Activated CD4-positive, alpha-beta T cell treated with anti-CD3 and anti-CD28 coated beads, Interleukin-2, amount 10 ng/mL, durations not matched to agents 24 days and 14 days (primary cell): ENCODE measurements at regions of chr16 and their contacts with region 1.

Region 1: GRCh38 chr16:89700100-89700648 is 1.3 kb downstream of the SPATA2L start:
- DNase-seq: peak; percentile 99
- H3K4me3 Mint-ChIP-seq: peak overlapping the region; percentile 86
- H3K27ac Mint-ChIP-seq: peak overlapping the region; percentile 87
- H3K4me1 Mint-ChIP-seq: peaks cover 14% of the 10 kb centered on the region
- H3K27me3 Mint-ChIP-seq: no peaks in the 10 kb centered on the region

Region 2: GRCh38 chr16:89560378-89561141 is 139.6 kb before region 1 on chr16 and contains the start of gene RPL13:
- intact Hi-C with region 1: loop called (anchors 2 kb)
- DNase-seq: peak; percentile 98
- H3K4me3 Mint-ChIP-seq: peak within 1 kb of the TSS; percentile 94
- H3K27ac Mint-ChIP-seq: peak within 1 kb of the TSS; percentile 99
- H3K4me1 Mint-ChIP-seq: peaks cover 44% of the 10 kb centered on the region
- H3K27me3 Mint-ChIP-seq: no peaks in the 10 kb centered on the region
- total RNA-seq, gene RPL13: 2,234 and 2,296 TPM in 2 replicates

Region 3: DNA sequence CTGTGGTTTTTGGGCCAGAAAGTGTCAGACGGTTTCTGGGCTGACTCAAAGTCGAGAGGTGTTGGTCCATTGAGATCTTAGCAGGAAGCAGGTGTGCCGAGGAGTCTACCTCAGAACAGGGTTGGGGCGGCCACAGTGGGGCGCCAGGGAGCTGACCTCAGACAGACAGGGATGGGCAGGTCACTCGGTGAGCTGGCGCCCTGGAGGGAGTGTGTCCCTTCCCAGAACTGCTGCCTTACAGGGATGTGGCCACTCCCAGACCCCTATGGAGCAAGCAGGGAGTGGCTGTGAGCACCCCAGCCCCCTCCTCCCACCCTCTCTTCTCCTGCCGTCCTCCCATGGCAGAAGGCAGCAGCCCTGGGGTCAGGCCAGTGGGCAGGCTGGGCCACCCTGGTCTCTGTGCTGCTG is 100.7 kb before region 1 on chr16:
- intact Hi-C with region 1: no loop called
- DNase-seq: peak; percentile 76
- H3K4me3 Mint-ChIP-seq: no peak overlapping the region
- H3K27ac Mint-ChIP-seq: peak overlapping the region; percentile 56
- H3K4me1 Mint-ChIP-seq: peaks cover 9% of the 10 kb centered on the region
- H3K27me3 Mint-ChIP-seq: no peaks in the 10 kb centered on the region

Region 4: GRCh38 chr16:89686520-89687091 is 13.6 kb before region 1 on chr16 and contains the start of gene CDK10:
- intact Hi-C with region 1: loop called (anchors 1 kb)
- DNase-seq: peak; percentile 99
- H3K4me3 Mint-ChIP-seq: peak within 1 kb of the TSS; percentile 95
- H3K27ac Mint-ChIP-seq: peak within 1 kb of the TSS; percentile 95
- H3K4me1 Mint-ChIP-seq: peaks cover 11% of the 10 kb centered on the region
- H3K27me3 Mint-ChIP-seq: no peaks in the 10 kb centered on the region
- total RNA-seq, gene CDK10: 104 and 108 TPM in 2 replicates

Region 5: GRCh38 chr16:89720813-89721545 is 20.8 kb after region 1 on chr16 and contains the starts of genes VPS9D1 and ZNF276:
- intact Hi-C with region 1: loop called (anchors 1 kb)
- DNase-seq: peak; percentile 94
- H3K4me3 Mint-ChIP-seq: peak within 1 kb of the TSS; percentile 90
- H3K27ac Mint-ChIP-seq: peak within 1 kb of the TSS; percentile 92
- H3K4me1 Mint-ChIP-seq: peaks cover 37% of the 10 kb centered on the region
- H3K27me3 Mint-ChIP-seq: no peaks in the 10 kb centered on the region
- total RNA-seq, gene VPS9D1: 3.6 and 3.9 TPM in 2 replicates
- total RNA-seq, gene ZNF276: 32.9 and 33.3 TPM in 2 replicates

Region 6: DNA sequence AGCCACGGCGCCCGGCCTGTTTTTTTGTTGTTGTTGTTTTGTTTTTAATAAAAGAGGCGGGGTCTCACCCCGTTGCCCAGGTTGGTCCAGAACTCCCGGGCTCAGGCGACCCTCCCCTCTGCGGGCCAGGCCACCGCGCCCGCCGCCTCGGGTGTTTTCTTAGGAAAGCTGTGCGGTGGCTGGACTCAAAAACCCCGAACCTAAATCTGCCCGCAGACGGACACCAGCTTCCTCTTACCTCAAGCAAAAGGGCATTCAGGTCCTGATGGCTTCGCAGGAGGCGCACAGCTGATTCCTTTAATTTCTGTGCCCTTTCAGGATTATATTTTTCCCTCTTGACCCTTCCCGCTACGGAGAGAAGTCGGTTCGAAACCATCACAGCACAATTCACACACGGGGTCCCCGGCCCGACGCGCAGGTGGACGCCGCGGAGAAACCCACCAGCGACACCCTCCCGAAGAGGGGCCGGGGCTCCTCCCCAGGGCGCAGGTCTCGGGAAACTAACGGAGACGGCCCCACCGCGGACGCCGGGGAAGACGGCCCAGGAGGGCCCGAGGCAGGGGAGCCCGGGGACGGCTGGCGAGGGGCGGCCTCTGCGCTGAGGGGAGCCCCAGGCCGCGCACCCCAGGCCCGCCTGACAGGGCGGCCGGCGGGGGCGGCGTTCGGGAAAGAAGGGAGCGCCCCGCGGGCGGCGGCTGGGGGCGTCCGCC is 115.6 kb after region 1 on chr16:
- intact Hi-C with region 1: loop called (anchors 5 kb)
- DNase-seq: peak; percentile 63
- H3K4me3 Mint-ChIP-seq: peak overlapping the region; percentile 89
- H3K27ac Mint-ChIP-seq: peak overlapping the region; percentile 67
- H3K4me1 Mint-ChIP-seq: peaks cover 29% of the 10 kb centered on the region
- H3K27me3 Mint-ChIP-seq: no peaks in the 10 kb centered on the region

Region 7: GRCh38 chr16:89922884-89923690 is 222.9 kb after region 1 on chr16 and contains the start of gene TUBB3:
- intact Hi-C with region 1: loop called (anchors 5 kb)
- DNase-seq: peak; percentile 92
- H3K4me3 Mint-ChIP-seq: peak within 1 kb of the TSS; percentile 83
- H3K27ac Mint-ChIP-seq: peak within 1 kb of the TSS; percentile 10
- H3K4me1 Mint-ChIP-seq: peaks cover 25% of the 10 kb centered on the region
- H3K27me3 Mint-ChIP-seq: peaks cover 19% of the 10 kb centered on the region
- total RNA-seq, gene TUBB3: 2.2 and 2.6 TPM in 2 replicates